Psoas muscle (tissue), 8 donors: ENCODE measurements at regions of chr5 and their contacts with region 1.

Region 1: GRCh38 chr5:73454351-73455036 is 5.9 kb upstream of the FOXD1 start:
- DNase-seq: no peak
- ATAC-seq: peak; percentile 48 to 75 (median 62)
- H3K4me3 ChIP-seq: no peak overlapping the region
- H3K27ac ChIP-seq: no peak overlapping the region
- H3K4me1 ChIP-seq: peaks cover 4% of the 10 kb centered on the region
- H3K27me3 ChIP-seq: peaks cover 10 to 89% (median 18%) of the 10 kb centered on the region in 3 donors
- CTCF ChIP-seq: peak; percentile 76

Region 2: GRCh38 chr5:73088026-73088425 is 366.5 kb before region 1 on chr5:
- intact Hi-C with region 1: loop called in 1 of 2 experiments (anchors 1 kb)
- DNase-seq: no peak
- ATAC-seq: no peak
- H3K4me3 ChIP-seq: no peak overlapping the region
- H3K27ac ChIP-seq: no peak overlapping the region
- H3K4me1 ChIP-seq: no peaks in the 10 kb centered on the region
- H3K27me3 ChIP-seq: no peaks in the 10 kb centered on the region
- CTCF ChIP-seq: no peak

Region 3: GRCh38 chr5:73215891-73216610 is 238.4 kb before region 1 on chr5:
- intact Hi-C with region 1: loop called (anchors 5 kb)
- DNase-seq: peak; percentile 79 to 88
- ATAC-seq: peak; percentile 98 to 100 (median 100)
- H3K4me3 ChIP-seq: peak overlapping the region; percentile 63
- H3K27ac ChIP-seq: no peak overlapping the region
- H3K4me1 ChIP-seq: no peaks in the 10 kb centered on the region
- H3K27me3 ChIP-seq: peaks cover 0 to 79% (median 5%) of the 10 kb centered on the region in 3 donors
- CTCF ChIP-seq: peak; percentile 87

Region 4: DNA sequence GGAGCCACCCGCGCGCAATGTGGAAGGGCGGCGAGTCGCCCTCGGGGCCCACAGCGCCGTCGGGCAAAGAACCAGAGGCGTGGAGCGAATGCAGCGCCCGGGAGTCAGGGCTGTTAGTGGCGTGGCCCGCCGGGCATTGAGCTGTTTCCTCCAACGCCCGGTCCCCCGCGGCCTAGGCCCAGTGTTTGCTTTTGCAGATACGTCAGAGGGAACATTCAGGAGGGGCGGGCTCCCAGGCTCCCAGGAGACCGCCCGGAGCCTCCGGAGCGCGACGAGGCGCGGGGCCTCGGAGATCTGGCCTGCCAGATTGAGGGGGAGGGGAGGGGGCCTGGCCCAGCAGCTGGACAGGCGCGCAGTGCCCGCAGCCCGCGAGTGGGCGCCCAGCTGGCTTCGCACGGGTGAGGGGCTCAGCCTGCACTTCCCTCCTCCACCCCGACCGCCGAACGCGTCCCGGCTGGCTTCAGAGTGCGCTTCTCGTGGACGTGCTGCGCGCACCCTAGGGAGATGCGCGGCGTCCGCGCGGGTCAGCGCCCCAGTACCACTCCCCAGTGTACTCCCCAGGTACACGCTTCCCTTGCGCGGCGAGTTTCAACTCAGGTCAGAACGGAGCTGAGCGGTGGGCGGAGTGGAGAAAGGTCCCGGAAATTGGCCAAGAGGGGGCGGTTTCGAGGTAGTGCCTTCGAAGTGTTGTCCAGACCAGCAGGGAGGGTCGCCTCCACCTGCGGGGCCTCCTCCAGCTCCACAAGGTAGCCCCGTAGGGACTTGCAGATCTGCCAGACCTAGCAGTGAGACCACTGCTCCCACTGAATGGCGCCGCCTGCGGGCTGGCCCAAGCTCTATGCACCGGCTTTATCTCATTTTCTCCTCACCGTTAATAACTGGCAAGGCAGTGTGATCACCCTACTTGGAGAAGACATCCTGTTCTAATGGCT is 151.1 kb before region 1 on chr5:
- intact Hi-C with region 1: loop called in 1 of 2 experiments (anchors 5 kb)
- DNase-seq: no peak
- ATAC-seq: peak in 1 of 4 donors; percentile 19
- H3K4me3 ChIP-seq: no peak overlapping the region
- H3K27ac ChIP-seq: no peak overlapping the region
- H3K4me1 ChIP-seq: peaks cover 14% of the 10 kb centered on the region
- H3K27me3 ChIP-seq: peaks cover 0 to 85% (median 42%) of the 10 kb centered on the region in 3 donors
- CTCF ChIP-seq: no peak